RWPE1 (cell line): ENCODE measurements at regions of chr6 and their contacts with region 1.

Region 1: GRCh38 chr6:169831450-169832246 is 80.2 kb downstream of the ERMARD start:
- DNase-seq: peak; percentile 50
- H3K27ac ChIP-seq: no peak overlapping the region
- CTCF ChIP-seq: peak; percentile 90

Region 2: GRCh38 chr6:170291271-170292110 is 459.8 kb after region 1 on chr6:
- CTCF ChIA-PET with region 1: interaction called, 39 read pairs
- POLR2A ChIA-PET with region 1: no interaction called
- DNase-seq: no peak
- H3K27ac ChIP-seq: peak overlapping the region; percentile 72
- CTCF ChIP-seq: no peak